Sigmoid colon (tissue), 7 donors: ENCODE measurements at regions of chr15 and their contacts with region 1.

Region 1: DNA sequence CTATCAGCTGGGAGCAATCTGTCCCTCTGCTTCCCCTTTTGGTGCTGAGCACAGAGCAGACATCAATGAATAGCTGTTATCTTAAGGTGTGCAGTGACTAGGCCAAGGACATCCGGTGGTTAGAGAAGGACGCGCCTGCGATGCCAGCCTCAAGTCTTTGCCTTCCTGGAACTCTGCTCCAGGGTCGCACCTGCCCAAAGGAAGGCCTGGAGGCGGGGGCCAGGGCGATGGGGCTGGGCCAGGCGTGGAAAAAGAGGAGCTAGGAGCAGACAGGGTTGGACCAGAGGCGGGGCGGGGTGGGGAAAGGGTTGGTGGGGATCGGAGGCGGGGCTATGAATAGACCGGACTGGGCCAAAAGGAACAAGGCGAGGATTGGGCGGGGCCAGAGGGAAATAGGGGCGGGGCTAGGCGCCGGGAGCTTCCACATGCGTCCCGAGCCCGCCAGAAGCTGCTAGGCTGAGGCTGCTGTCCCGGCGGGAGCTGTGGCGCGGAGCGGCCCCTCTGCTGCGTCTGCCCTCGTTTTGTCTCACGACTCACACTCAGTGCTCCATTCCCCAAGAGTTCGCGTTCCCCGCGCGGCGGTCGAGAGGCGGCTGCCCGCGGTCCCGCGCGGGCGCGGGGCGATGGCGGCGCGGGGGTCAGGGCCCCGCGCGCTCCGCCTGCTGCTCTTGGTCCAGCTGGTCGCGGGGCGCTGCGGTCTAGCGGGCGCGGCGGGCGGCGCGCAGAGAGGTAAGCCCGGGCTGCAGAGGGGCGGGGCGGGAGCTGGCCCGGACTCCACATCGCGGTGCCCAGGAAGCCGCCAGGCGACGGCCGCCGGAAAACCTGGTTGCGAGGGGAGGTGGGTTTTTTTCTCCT is at the start of gene CHRNA5:
- DNase-seq: peak; percentile 97
- H3K4me3 ChIP-seq: peak within 1 kb of the TSS; percentile 42 to 61 (median 54)
- H3K27ac ChIP-seq: peak within 1 kb of the TSS; percentile 62 to 82 (median 80)
- H3K4me1 ChIP-seq: peaks cover 0 to 18% (median 10%) of the 10 kb centered on the region in 4 donors
- H3K27me3 ChIP-seq: no peaks in the 10 kb centered on the region
- CTCF ChIP-seq: no peak
- EP300 ChIP-seq: no peak
- POLR2A ChIP-seq: no peak
- total RNA-seq, gene CHRNA5: 1.2 to 3.0 (median 1.7) TPM

Region 2: GRCh38 chr15:77738441-77739302 is 826.7 kb before region 1 on chr15:
- intact Hi-C with region 1: no loop called
- DNase-seq: no peak
- H3K4me3 ChIP-seq: no peak overlapping the region
- H3K27ac ChIP-seq: no peak overlapping the region
- H3K4me1 ChIP-seq: no peaks in the 10 kb centered on the region
- H3K27me3 ChIP-seq: peaks cover 0 to 25% (median 5%) of the 10 kb centered on the region in 3 donors
- CTCF ChIP-seq: no peak
- EP300 ChIP-seq: no peak
- POLR2A ChIP-seq: no peak

Region 3: GRCh38 chr15:78195735-78196201 is 369.6 kb before region 1 on chr15:
- intact Hi-C with region 1: no loop called
- DNase-seq: no peak
- H3K4me3 ChIP-seq: no peak overlapping the region
- H3K27ac ChIP-seq: no peak overlapping the region
- H3K4me1 ChIP-seq: no peaks in the 10 kb centered on the region
- H3K27me3 ChIP-seq: no peaks in the 10 kb centered on the region
- CTCF ChIP-seq: peak in 3 of 4 experiments; percentile 32 to 56 (median 54)
- EP300 ChIP-seq: no peak
- POLR2A ChIP-seq: no peak

Region 4: DNA sequence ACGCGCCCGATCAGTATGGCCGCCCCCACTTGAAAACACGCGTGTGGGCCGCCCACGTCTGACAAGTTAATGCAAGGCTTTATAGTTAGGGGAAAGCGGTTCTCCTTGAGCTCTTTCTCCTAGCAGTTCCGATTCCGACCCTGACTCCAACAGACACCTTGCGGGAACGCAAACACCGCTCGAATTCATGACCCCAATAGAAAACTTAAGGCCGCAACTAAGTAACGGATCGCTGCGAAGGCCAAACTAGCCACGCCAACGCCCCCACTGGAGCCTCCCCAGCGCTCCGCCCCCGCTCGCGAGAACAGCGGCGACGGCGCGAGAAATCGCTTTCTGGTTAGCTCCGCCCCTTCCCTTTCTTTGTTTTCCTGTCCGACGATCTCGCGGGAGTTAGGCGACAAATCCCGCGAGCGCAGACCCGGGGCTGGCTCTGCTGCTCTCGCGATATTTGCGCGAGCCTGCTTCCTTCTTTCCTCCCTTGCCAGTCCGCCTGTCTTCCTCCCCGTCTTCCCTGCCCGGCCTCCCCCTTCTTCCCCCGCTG is 127.5 kb before region 1 on chr15 and contains the start of gene IREB2:
- intact Hi-C with region 1: loop called (anchors 10 kb)
- DNase-seq: peak; percentile 99
- H3K4me3 ChIP-seq: peak within 1 kb of the TSS; percentile 88 to 97 (median 91)
- H3K27ac ChIP-seq: peak within 1 kb of the TSS; percentile 96 to 99 (median 96)
- H3K4me1 ChIP-seq: peaks cover 0 to 48% (median 44%) of the 10 kb centered on the region in 4 donors
- H3K27me3 ChIP-seq: no peaks in the 10 kb centered on the region
- CTCF ChIP-seq: no peak
- EP300 ChIP-seq: peak in 1 of 4 donors; percentile 33
- POLR2A ChIP-seq: peak in 1 of 2 donors; percentile 23
- total RNA-seq, gene IREB2: 28.4 to 42.1 (median 34.3) TPM

Region 5: DNA sequence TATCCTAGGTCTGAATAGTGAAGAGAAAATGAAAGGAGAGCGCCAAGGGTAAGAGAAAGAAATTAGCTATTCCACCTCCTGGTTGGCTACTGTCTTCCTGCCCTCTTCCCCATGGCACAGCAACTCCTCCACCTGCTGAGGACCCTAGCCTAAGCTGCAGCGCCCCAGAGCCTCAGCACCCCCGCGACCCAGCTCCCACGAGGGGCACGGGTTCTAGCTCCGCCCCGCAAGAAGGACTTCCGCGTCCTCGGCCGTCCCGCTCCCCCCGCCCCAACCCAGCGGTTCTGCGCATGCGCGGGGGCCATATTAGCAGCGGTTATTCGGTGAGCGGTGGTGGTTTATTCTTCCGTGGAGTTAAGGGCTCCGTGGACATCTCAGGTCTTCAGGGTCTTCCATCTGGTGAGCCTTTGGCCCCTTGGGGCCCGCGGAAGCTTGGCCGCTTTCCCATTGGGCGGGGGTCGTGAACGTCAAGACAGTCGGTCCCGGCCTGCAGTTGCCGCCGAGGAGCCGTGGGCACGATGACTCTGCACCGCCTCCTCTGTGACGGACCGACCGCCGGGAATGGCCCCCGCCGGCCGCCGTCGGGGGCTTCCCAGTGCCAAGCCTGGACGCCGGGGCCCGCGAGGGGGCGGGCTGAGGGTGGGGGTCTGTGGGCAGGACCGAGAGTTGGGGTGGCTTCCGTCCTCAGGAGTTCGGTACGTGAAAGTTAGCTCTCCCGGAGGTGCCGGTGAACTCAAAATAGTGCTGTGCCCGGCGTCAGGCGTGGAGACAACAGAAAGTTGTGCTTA is 25.0 kb before region 1 on chr15 and contains the start of gene PSMA4:
- intact Hi-C with region 1: loop called (anchors 2 kb)
- DNase-seq: peak; percentile 96
- H3K4me3 ChIP-seq: peak within 1 kb of the TSS; percentile 73 to 88 (median 78)
- H3K27ac ChIP-seq: peak within 1 kb of the TSS; percentile 94 to 97 (median 96)
- H3K4me1 ChIP-seq: peaks cover 0 to 29% (median 16%) of the 10 kb centered on the region in 4 donors
- H3K27me3 ChIP-seq: no peaks in the 10 kb centered on the region
- CTCF ChIP-seq: peak in 2 of 4 experiments; percentile 33 to 44
- EP300 ChIP-seq: no peak
- POLR2A ChIP-seq: peak; percentile 75 to 90
- total RNA-seq, gene PSMA4: 90.8 to 173 (median 157) TPM

Region 6: DNA sequence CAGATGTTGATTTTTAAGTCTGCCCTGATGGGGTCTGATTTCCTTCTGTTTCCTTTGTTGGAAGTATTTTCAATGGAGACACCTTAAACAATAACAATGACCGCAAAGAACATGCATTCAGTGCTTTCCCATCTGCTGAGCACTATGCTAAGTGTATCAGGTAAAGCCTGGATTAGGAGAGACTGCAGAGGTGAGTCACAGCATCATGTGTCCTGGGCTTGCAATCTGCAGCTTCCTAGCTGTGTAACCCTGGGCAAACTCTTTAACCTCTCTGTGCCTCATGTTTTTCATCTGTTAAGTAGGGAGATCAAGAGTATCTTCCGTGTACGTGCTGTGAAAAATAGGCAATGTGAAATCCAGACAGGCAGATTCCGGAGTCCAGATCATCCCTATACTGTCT is 88.9 kb after region 1 on chr15:
- intact Hi-C with region 1: no loop called
- DNase-seq: no peak
- H3K4me3 ChIP-seq: no peak overlapping the region
- H3K27ac ChIP-seq: no peak overlapping the region
- H3K4me1 ChIP-seq: no peaks in the 10 kb centered on the region
- H3K27me3 ChIP-seq: no peaks in the 10 kb centered on the region
- CTCF ChIP-seq: no peak
- EP300 ChIP-seq: no peak
- POLR2A ChIP-seq: no peak

Region 7: DNA sequence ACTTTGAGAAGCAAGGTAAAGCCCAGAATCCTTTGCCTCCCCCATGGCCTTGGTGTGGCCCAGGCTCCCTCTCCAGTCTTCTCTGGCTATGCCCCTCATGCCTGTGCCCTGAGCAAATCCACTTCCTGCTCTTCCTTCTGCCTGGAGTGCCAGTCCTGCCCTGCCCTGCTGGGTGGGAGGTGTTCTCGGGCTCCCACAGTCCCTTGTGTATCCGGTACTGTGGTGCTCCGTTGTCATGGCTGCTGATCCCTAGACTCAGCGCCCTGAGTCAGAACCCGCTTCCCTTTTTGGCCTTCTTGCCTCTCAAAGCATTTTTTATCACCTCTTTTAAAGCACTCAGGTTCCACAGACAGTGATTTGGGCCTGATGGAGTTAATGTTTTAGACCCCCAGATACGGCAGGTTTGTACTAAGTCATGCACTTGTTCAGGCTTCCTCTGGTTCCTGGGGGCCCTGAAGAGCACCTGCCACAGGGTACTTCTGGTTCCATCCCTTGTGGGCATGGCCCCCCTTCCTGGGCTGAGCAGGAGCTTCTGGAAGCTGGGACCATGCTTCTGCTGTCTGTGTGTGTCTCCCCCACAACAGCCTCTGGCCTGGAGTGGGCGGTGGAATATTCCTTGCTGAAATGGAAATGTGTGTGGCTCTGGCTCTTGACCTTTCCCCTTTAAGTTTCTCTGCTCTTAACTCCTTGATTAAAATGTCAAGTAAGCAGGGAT is 275.5 kb after region 1 on chr15:
- intact Hi-C with region 1: no loop called
- DNase-seq: no peak
- H3K4me3 ChIP-seq: no peak overlapping the region
- H3K27ac ChIP-seq: peak overlapping the region in 1 of 4 donors; percentile 25
- H3K4me1 ChIP-seq: no peaks in the 10 kb centered on the region
- H3K27me3 ChIP-seq: no peaks in the 10 kb centered on the region
- CTCF ChIP-seq: no peak
- EP300 ChIP-seq: no peak
- POLR2A ChIP-seq: no peak